Activated T-helper 1 cell treated with anti-CD3 and anti-CD28 coated beads, Interleukin-12 subunit alpha, Interleukin-12 subunit beta, Interleukin-2, Interleukin-4 antibody, amounts not matched to agents 30 ng/mL and 10 ng/mL and 1 ng/mL, durations not matched to agents 14 hours and 24 hours and 36 hours (primary cell): ENCODE measurements at regions of chr10 and their contacts with region 1.

Region 1: GRCh38 chr10:67764012-67764822 is 68.2 kb upstream of the CTNNA3 start:
- DNase-seq: peak; percentile 95
- H3K4me3 Mint-ChIP-seq: peak overlapping the region; percentile 86
- H3K27ac Mint-ChIP-seq: peak overlapping the region; percentile 94
- H3K4me1 Mint-ChIP-seq: peaks cover 28% of the 10 kb centered on the region
- H3K27me3 Mint-ChIP-seq: peaks cover 9% of the 10 kb centered on the region

Region 2: GRCh38 chr10:67612577-67613537 is 151.4 kb before region 1 on chr10:
- intact Hi-C with region 1: loop called (anchors 1 kb)
- DNase-seq: peak; percentile 66
- H3K4me3 Mint-ChIP-seq: peak overlapping the region; percentile 47
- H3K27ac Mint-ChIP-seq: peak overlapping the region; percentile 49
- H3K4me1 Mint-ChIP-seq: peaks cover 23% of the 10 kb centered on the region
- H3K27me3 Mint-ChIP-seq: peaks cover 9% of the 10 kb centered on the region

Region 3: DNA sequence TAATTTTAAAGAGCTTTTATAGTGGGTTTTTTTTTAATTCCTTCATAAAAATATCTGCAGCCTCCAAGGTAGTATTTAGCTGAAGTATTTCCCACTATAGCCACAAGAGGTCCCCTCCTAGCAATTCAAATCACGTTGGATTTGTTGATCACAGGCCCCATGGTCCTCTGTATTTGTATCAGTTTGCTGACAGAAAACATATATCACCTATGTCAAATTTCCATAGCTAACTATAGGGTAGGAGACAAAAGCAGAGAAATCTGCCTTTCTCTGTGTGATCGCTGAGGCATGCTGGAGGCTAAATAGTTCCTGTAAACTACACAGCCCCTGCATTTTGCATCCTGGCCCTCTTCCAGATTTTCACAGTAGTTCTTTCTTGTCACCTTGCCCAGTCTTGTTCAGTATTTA is 66.5 kb before region 1 on chr10:
- intact Hi-C with region 1: loop called (anchors 5 kb)
- DNase-seq: no peak
- H3K4me3 Mint-ChIP-seq: no peak overlapping the region
- H3K27ac Mint-ChIP-seq: no peak overlapping the region
- H3K4me1 Mint-ChIP-seq: no peaks in the 10 kb centered on the region
- H3K27me3 Mint-ChIP-seq: peaks cover 35% of the 10 kb centered on the region

Region 4: DNA sequence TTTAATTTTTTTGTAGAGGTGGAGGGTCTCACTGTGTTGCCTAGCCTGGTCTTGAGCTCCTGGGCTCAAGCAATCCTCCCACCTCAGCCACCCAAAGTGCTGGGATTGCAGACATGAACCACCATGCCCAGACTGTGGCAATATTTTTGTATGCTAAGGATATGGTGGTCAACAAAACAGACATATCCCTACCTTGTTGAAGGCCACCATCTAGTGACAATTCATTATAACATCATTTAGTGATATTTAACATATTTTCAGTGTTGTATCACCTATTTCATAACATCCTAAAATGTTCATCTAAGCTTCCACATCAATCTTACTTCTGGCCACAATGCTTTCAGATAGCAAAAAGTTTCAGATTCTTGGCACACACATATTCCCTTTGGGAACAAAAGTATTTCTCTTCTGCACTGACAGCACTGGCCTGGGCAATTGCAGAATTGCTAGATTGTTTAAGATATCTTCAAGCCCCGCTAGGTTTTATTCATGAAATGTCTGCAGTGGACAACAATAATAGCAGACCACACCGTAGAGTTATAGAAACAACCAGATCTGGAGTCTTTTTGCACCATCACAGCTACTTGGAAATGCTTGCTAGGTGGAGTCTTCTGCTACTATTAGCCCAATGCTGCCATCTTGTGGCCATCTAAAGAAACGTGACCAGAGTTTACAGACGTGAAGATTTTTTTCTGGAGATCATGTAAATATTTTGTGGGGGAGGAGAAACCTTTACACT is 15.4 kb after region 1 on chr10:
- intact Hi-C with region 1: loop called (anchors 1 kb)
- DNase-seq: peak; percentile 63
- H3K4me3 Mint-ChIP-seq: no peak overlapping the region
- H3K27ac Mint-ChIP-seq: no peak overlapping the region
- H3K4me1 Mint-ChIP-seq: peaks cover 41% of the 10 kb centered on the region
- H3K27me3 Mint-ChIP-seq: no peaks in the 10 kb centered on the region

Region 5: DNA sequence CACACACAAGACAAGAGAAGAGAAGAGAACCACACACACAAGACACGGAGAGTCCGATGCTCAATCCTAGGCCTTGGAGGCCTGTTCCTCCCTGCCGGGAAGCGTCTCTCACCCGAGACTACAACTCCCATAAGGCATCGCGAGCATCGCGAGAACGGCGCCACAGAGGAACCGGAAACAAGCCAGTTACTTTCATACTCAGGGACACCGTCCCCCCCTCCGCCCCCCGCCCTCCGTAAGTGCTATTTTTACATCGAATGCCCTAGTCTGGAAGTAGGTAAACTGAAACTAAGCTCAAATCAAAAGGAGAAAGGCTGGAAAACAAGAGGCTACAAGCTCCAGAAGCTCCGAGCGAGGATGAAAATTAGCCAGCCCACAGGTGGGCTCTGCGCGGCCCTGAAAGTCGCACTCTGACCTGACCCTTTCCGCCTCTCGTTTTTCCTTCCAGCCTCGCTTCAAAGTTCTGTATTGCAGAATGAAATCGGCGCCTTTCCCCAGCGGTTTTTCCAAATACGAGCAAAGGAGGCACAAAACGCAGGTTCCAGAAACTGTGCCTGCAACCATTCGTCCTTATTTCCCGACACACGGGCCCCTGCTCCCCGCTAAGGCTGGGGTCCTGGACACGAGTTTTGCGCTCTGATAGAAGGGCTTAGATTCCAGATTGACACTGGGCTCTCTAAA is 85.3 kb after region 1 on chr10:
- intact Hi-C with region 1: loop called (anchors 1 kb)
- DNase-seq: peak; percentile 92
- H3K4me3 Mint-ChIP-seq: peak overlapping the region; percentile 91
- H3K27ac Mint-ChIP-seq: peak overlapping the region; percentile 95
- H3K4me1 Mint-ChIP-seq: no peaks in the 10 kb centered on the region
- H3K27me3 Mint-ChIP-seq: no peaks in the 10 kb centered on the region

Region 6: GRCh38 chr10:67884313-67884841 is 120.2 kb after region 1 on chr10 and contains the start of gene SIRT1:
- intact Hi-C with region 1: loop called (anchors 1 kb)
- DNase-seq: peak; percentile 91
- H3K4me3 Mint-ChIP-seq: peak within 1 kb of the TSS; percentile 91
- H3K27ac Mint-ChIP-seq: peak within 1 kb of the TSS; percentile 87
- H3K4me1 Mint-ChIP-seq: peaks cover 28% of the 10 kb centered on the region
- H3K27me3 Mint-ChIP-seq: peaks cover 4% of the 10 kb centered on the region
- total RNA-seq, gene SIRT1: 27.4 and 29.3 TPM in 2 replicates